ENCODE measurements at regions of chr9 and their contacts with region 1.

Region 1: GRCh38 chr9:35675732-35676392 is 2.1 kb downstream of the CA9 start:
- DNase-seq: peak in 4 of 9 donors; percentile 12 to 41 (median 27)
- ATAC-seq: peak; percentile 74
- H3K4me3 ChIP-seq: peak overlapping the region; percentile 39
- H3K4me3 Mint-ChIP-seq: peak overlapping the region; percentile 53 to 89 (median 76)
- H3K27ac ChIP-seq: no peak overlapping the region
- H3K27ac Mint-ChIP-seq: peak overlapping the region in 3 of 9 donors; percentile 18 to 79 (median 33)
- H3K4me1 ChIP-seq: peaks cover 0 to 11% of the 10 kb centered on the region in 2 donors
- H3K4me1 Mint-ChIP-seq: peaks cover 8 to 20% (median 14%) of the 10 kb centered on the region in 7 donors
- H3K27me3 ChIP-seq: peaks cover 0 to 4% of the 10 kb centered on the region in 2 donors
- H3K27me3 Mint-ChIP-seq: peaks cover 0 to 35% (median 9%) of the 10 kb centered on the region in 5 donors

Region 2: DNA sequence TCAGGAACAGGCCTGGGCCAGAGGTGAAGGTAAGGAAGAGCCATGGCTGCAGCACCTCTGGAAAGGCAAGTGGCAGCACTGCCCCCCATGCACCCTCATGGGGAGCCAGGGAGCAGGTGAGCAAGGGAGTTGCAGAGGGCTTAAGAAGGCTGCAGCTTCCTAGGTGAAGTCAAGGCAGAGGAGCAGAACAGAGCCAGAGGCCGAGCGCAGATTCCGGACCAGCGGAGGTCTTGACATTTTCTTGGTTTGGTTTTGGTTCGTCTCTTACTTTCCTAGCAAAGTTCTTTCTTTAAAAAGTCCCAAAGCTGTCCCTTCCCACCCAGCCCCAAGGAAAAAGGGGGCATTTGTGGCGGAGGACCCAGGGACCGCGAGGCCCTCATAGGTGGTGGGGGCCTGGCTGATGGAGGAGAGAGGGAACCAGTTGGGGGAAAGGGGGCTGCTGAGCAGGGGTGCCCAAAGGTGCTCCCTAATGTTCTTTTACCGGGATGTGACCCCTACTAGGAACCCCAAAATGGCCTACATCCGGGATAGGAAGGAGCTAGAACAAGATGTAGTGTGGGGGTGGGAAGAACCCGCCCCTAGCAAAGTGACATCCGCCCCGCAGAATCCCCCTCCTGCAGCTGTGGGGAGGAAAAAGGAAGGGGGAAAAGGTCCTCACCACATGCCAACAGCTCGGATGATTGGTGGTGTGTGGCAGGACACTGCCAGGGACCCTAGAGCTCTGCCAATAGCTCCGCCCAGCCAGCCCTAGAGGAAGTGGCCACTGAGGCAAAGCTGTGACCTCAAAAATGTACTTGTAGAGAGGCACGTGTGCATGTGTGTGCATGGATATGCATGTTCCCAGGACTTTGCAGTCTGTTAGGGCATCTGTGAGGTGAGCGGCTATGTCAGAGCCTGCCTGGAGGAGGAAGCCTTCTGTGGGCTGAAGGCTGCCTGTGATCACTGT is 56.7 kb before region 1 on chr9:
- CTCF ChIA-PET with region 1: no interaction called
- POLR2A ChIA-PET with region 1: no interaction called
- intact Hi-C with region 1: no loop called
- DNase-seq: peak in 2 of 9 donors; percentile 7 to 42
- ATAC-seq: peak; percentile 54
- H3K4me3 ChIP-seq: peak overlapping the region; percentile 25
- H3K4me3 Mint-ChIP-seq: peak overlapping the region in 8 of 10 donors; percentile 18 to 89 (median 67)
- H3K27ac ChIP-seq: peak overlapping the region; percentile 38
- H3K27ac Mint-ChIP-seq: peak overlapping the region in 8 of 9 donors; percentile 45 to 92 (median 87)
- H3K4me1 ChIP-seq: peaks cover 27 to 36% of the 10 kb centered on the region in 2 donors
- H3K4me1 Mint-ChIP-seq: peaks cover 33 to 44% (median 38%) of the 10 kb centered on the region in 7 donors
- H3K27me3 ChIP-seq: no peaks in the 10 kb centered on the region
- H3K27me3 Mint-ChIP-seq: no peaks in the 10 kb centered on the region

Region 3: GRCh38 chr9:35664531-35665470 is 11.1 kb before region 1 on chr9 and contains the start of gene ARHGEF39:
- CTCF ChIA-PET with region 1: interaction called, 3 read pairs
- POLR2A ChIA-PET with region 1: interaction called, 4 read pairs
- intact Hi-C with region 1: loop called in 1 of 2 experiments (anchors 1 kb)
- DNase-seq: peak; percentile 47 to 87 (median 59)
- ATAC-seq: peak; percentile 78
- H3K4me3 ChIP-seq: peak within 1 kb of the TSS; percentile 69
- H3K4me3 Mint-ChIP-seq: peak within 1 kb of the TSS; percentile 82 to 94 (median 87)
- H3K27ac ChIP-seq: peak within 1 kb of the TSS; percentile 54
- H3K27ac Mint-ChIP-seq: peak within 1 kb of the TSS; percentile 60 to 100 (median 80)
- H3K4me1 ChIP-seq: peaks cover 29% of the 10 kb centered on the region in 2 donors
- H3K4me1 Mint-ChIP-seq: peaks cover 39 to 66% (median 64%) of the 10 kb centered on the region in 7 donors
- H3K27me3 ChIP-seq: no peaks in the 10 kb centered on the region
- H3K27me3 Mint-ChIP-seq: no peaks in the 10 kb centered on the region
- total RNA-seq, gene ARHGEF39: 0.11 to 10.4 (median 1.0) TPM in 3 of 5 experiments, not detected in the others

Region 4: GRCh38 chr9:35690431-35691333 is 14.8 kb after region 1 on chr9:
- CTCF ChIA-PET with region 1: interaction called, 21 read pairs
- POLR2A ChIA-PET with region 1: interaction called, 6 read pairs
- intact Hi-C with region 1: loop called in 1 of 2 experiments (anchors 2 kb)
- DNase-seq: peak in 7 of 9 donors; percentile 21 to 52 (median 31)
- ATAC-seq: peak; percentile 50
- H3K4me3 ChIP-seq: peak overlapping the region; percentile 65
- H3K4me3 Mint-ChIP-seq: peak overlapping the region; percentile 80 to 94 (median 88)
- H3K27ac ChIP-seq: peak overlapping the region; percentile 70
- H3K27ac Mint-ChIP-seq: peak overlapping the region; percentile 12 to 95 (median 74)
- H3K4me1 ChIP-seq: peaks cover 0 to 5% of the 10 kb centered on the region in 2 donors
- H3K4me1 Mint-ChIP-seq: peaks cover 16 to 31% (median 25%) of the 10 kb centered on the region in 7 donors
- H3K27me3 ChIP-seq: no peaks in the 10 kb centered on the region
- H3K27me3 Mint-ChIP-seq: no peaks in the 10 kb centered on the region

Region 5: DNA sequence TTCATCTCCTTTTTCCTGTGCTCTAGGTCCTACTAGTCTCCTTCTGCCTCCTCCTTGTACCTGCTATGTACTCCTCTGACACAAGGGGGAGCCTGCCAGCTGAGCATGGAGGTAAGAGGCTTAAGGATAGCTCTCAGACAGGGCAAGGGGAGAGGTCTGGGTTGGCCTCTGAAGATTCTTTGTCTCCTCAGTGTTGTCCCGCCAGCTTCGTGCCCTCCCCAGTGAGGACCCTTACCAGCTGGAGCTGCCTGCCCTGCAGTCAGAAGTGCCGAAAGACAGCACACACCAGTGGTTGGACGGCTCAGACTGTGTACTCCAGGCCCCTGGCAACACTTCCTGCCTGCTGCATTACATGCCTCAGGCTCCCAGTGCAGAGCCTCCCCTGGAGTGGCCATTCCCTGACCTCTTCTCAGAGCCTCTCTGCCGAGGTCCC is 60.4 kb after region 1 on chr9:
- CTCF ChIA-PET with region 1: no interaction called
- POLR2A ChIA-PET with region 1: no interaction called
- intact Hi-C with region 1: no loop called
- DNase-seq: peak; percentile 27 to 75 (median 73)
- ATAC-seq: peak; percentile 28
- H3K4me3 ChIP-seq: no peak overlapping the region
- H3K4me3 Mint-ChIP-seq: peak overlapping the region in 1 of 10 donors; percentile 56
- H3K27ac ChIP-seq: no peak overlapping the region
- H3K27ac Mint-ChIP-seq: peak overlapping the region in 6 of 9 donors; percentile 1 to 81 (median 29)
- H3K4me1 ChIP-seq: peaks cover 18 to 22% of the 10 kb centered on the region in 2 donors
- H3K4me1 Mint-ChIP-seq: peaks cover 17 to 34% (median 22%) of the 10 kb centered on the region in 7 donors
- H3K27me3 ChIP-seq: no peaks in the 10 kb centered on the region
- H3K27me3 Mint-ChIP-seq: no peaks in the 10 kb centered on the region